Right ventricle myocardium inferior (tissue), 1 donor: ENCODE measurements at regions of chr1 and their contacts with region 1.

Region 1: DNA sequence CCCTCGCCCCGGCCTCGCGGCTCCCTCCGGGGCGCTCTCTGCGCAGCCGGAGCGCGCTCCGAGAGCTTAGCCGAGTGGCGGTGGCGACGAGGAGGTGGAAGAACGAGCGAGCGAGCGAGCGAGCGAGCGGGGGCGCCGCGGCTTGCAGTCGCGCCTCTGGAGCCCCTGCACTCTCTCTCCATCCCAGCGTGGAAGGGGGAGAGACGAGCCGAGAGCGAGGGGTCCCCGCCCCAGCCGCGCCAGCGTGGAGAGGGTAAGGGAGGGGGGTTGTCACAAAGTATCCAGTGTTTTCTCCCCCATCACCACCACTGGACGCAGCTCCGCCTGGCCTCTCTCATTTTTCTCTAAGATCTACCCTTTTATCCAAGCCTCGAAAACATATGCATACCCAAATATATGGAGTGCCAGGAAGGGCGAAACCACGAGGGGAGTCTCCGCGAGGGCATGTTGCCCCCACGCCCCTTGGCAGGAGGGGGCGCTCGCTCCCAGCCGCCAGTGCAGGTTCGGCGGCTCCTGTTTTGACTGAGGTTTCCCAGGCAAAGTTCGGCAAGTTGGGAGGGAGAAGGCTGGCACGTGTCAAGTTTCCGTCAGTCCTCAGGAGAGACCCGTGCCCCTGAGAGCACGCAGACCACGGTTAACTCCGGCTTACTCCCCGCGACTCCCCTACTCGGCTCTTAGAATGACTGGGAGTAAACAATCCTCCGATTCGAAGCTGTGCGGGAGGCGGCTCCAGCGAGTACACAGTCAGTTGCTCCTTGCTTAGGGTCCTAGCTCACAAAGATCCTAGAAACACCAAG is 569 bp upstream of the DAB1 start:
- DNase-seq: no peak
- ATAC-seq: peak; percentile 72

Region 2: DNA sequence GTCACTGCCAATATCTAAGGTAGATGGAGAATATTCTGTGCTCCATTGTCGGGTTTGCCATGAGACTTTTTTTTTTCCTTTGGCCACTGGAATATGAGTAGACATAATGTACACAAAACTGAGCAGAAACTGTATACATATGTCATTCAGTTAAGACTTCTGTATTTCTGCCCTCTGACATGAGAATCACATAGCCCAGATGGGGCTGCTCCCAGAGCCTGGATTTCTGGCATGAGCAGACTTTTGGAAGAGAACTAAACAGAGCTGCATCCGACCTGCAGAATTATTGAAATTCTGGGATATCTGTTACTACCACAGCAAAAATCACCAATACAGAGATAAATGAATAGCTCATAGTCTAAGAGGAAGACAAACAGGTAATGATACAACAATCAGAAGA is 62.9 kb before region 1 on chr1:
- intact Hi-C with region 1: loop called (anchors 5 kb)
- DNase-seq: no peak
- ATAC-seq: no peak

Region 3: GRCh38 chr1:57727121-57727520 is 302.7 kb after region 1 on chr1:
- intact Hi-C with region 1: loop called (anchors 10 kb)
- DNase-seq: no peak
- ATAC-seq: no peak

Region 4: GRCh38 chr1:58047265-58047858 is 622.9 kb after region 1 on chr1:
- intact Hi-C with region 1: loop called (anchors 10 kb)
- DNase-seq: no peak
- ATAC-seq: no peak

Region 5: GRCh38 chr1:58162952-58163550 is 738.6 kb after region 1 on chr1:
- intact Hi-C with region 1: loop called (anchors 2 kb)
- DNase-seq: peak; percentile 60
- ATAC-seq: peak; percentile 84